ENCODE measurements at regions of chr2 and their contacts with region 1.

Region 1: GRCh38 chr2:217785544-217786045 is 217.2 kb downstream of the TNS1 start:
- DNase-seq: peak; percentile 73
- H3K4me3 ChIP-seq: no peak overlapping the region
- H3K27ac ChIP-seq: no peak overlapping the region
- H3K4me1 ChIP-seq: 0 out of 2 replicates have a peak, but pooled peaks cover 6% of the 10 kb centered on the region
- H3K27me3 ChIP-seq: no peaks in the 10 kb centered on the region

Region 2: GRCh38 chr2:217988014-217988839 is 202.6 kb after region 1 on chr2:
- in situ Hi-C with region 1: loop called (anchors 10 kb)
- DNase-seq: peak; percentile 82
- H3K4me3 ChIP-seq: no peak overlapping the region
- H3K27ac ChIP-seq: peak overlapping the region; percentile 33
- H3K4me1 ChIP-seq: peaks cover 23% of the 10 kb centered on the region
- H3K27me3 ChIP-seq: no peaks in the 10 kb centered on the region

Region 3: GRCh38 chr2:218063486-218063885 is 277.9 kb after region 1 on chr2:
- in situ Hi-C with region 1: loop called (anchors 10 kb)
- DNase-seq: no peak
- H3K4me3 ChIP-seq: no peak overlapping the region
- H3K27ac ChIP-seq: no peak overlapping the region
- H3K4me1 ChIP-seq: no peaks in the 10 kb centered on the region
- H3K27me3 ChIP-seq: peaks cover 39% of the 10 kb centered on the region

Region 4: DNA sequence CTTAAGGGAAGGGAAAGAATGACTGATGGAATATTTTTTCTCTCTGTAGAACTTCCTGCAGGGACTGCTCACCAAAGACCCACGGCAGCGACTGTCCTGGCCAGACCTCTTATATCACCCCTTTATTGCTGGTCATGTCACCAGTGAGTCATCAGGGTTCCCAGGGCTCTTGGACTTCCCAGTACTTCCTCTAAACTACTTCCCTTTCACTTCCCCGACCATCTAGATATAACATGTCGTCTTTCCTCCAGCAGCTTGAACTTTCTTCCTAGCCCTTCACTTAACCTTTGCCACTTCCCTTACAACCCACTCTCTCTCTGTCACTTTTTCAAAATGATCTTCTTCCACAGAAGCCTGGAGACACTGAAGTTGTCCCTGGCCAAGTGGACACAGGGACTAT is 893.5 kb after region 1 on chr2:
- in situ Hi-C with region 1: no loop called
- DNase-seq: peak; percentile 54
- H3K4me3 ChIP-seq: no peak overlapping the region
- H3K27ac ChIP-seq: no peak overlapping the region
- H3K4me1 ChIP-seq: no peaks in the 10 kb centered on the region
- H3K27me3 ChIP-seq: no peaks in the 10 kb centered on the region